ENCODE measurements at regions of chrX and their contacts with region 1.

Region 1: GRCh38 chrX:68699960-68700746 is 52.7 kb downstream of the STARD8 start:
- DNase-seq: peak; percentile 71 to 91 (median 88)
- H3K4me3 ChIP-seq: peak overlapping the region in 1 of 3 experiments; percentile 29
- H3K4me3 Mint-ChIP-seq: peak overlapping the region in 1 of 2 donors; percentile 69
- H3K27ac ChIP-seq: peak overlapping the region; percentile 84 to 87
- H3K27ac Mint-ChIP-seq: peak overlapping the region; percentile 90 to 100 (median 98)
- H3K4me1 ChIP-seq: peaks cover 94 to 100% of the 10 kb centered on the region in 2 donors
- H3K4me1 Mint-ChIP-seq: peaks cover 89% of the 10 kb centered on the region
- H3K27me3 ChIP-seq: no peaks in the 10 kb centered on the region
- H3K27me3 Mint-ChIP-seq: peaks cover 0 to 6% (median 2%) of the 10 kb centered on the region in 3 donors
- CTCF ChIP-seq: no peak

Region 2: GRCh38 chrX:68571610-68572311 is 128.4 kb before region 1 on chrX:
- intact Hi-C with region 1: no loop called
- DNase-seq: peak in 1 of 3 donors; percentile 41
- H3K4me3 ChIP-seq: no peak overlapping the region
- H3K4me3 Mint-ChIP-seq: no peak overlapping the region
- H3K27ac ChIP-seq: no peak overlapping the region
- H3K27ac Mint-ChIP-seq: peak overlapping the region in 2 of 7 donors; percentile 6 to 78
- H3K4me1 ChIP-seq: no peaks in the 10 kb centered on the region
- H3K4me1 Mint-ChIP-seq: peaks cover 4% of the 10 kb centered on the region
- H3K27me3 ChIP-seq: no peaks in the 10 kb centered on the region
- H3K27me3 Mint-ChIP-seq: peaks cover 0 to 2% (median 1%) of the 10 kb centered on the region in 3 donors
- CTCF ChIP-seq: no peak

Region 3: GRCh38 chrX:68599251-68600152 is 100.7 kb before region 1 on chrX:
- intact Hi-C with region 1: loop called in 1 of 2 experiments (anchors 10 kb)
- DNase-seq: peak in 2 of 3 donors; percentile 2 to 3
- H3K4me3 ChIP-seq: no peak overlapping the region
- H3K4me3 Mint-ChIP-seq: no peak overlapping the region
- H3K27ac ChIP-seq: no peak overlapping the region
- H3K27ac Mint-ChIP-seq: no peak overlapping the region
- H3K4me1 ChIP-seq: no peaks in the 10 kb centered on the region
- H3K4me1 Mint-ChIP-seq: peaks cover 8% of the 10 kb centered on the region
- H3K27me3 ChIP-seq: no peaks in the 10 kb centered on the region
- H3K27me3 Mint-ChIP-seq: peaks cover 0 to 3% (median 1%) of the 10 kb centered on the region in 3 donors
- CTCF ChIP-seq: peak; percentile 74

Region 4: DNA sequence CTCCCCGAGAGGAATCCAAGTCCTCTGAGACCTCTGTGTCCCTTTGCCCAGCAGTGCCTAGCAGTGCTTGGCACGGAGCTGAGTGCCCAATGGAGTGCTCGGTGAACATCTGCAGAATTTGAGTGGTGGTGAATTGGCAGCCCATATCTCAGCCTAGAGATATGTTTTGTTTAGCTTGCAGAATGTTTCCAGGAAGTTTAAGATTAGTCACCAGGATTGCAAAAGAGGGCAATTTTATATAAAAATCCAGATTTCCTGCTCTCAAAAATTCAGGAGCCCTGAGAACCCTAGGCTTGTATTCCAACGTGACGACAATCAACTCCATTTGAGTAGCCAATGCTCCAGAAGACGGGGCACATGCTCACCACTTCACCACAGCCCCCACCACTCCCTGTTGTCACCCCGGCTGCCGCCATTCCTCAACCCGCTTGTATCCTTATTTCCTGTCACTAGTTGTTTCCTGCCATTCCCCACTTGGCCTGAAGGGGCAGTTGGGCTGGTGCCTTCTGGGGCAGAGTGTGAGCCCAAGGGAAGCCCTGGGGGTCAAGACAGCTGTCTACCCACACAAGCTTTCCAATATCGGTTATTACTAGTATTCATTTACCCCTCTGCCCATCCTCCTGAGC is 245.6 kb after region 1 on chrX:
- intact Hi-C with region 1: no loop called
- DNase-seq: no peak
- H3K4me3 ChIP-seq: no peak overlapping the region
- H3K4me3 Mint-ChIP-seq: no peak overlapping the region
- H3K27ac ChIP-seq: no peak overlapping the region
- H3K27ac Mint-ChIP-seq: peak overlapping the region in 1 of 7 donors; percentile 68
- H3K4me1 ChIP-seq: no peaks in the 10 kb centered on the region
- H3K4me1 Mint-ChIP-seq: no peaks in the 10 kb centered on the region
- H3K27me3 ChIP-seq: no peaks in the 10 kb centered on the region
- H3K27me3 Mint-ChIP-seq: peaks cover 0 to 10% (median 2%) of the 10 kb centered on the region in 3 donors
- CTCF ChIP-seq: peak; percentile 17

Measured in CD14-positive monocyte (primary cell).